Dorsolateral prefrontal cortex (tissue), 120 donors: ENCODE measurements at regions of chr6 and their contacts with region 1.

Region 1: GRCh38 chr6:35048631-35049083 is 92.5 kb downstream of the TCP11 start:
- DNase-seq: peak in 8 of 10 donors; percentile 47 to 74 (median 67)
- H3K4me3 ChIP-seq: peak overlapping the region in 55 of 59 donors; percentile 0 to 63 (median 35)
- H3K27ac ChIP-seq: peak overlapping the region; percentile 80 to 99 (median 97)
- H3K27me3 ChIP-seq: no peaks in the 10 kb centered on the region
- CTCF ChIP-seq: peak in 54 of 56 donors; percentile 15 to 70 (median 56)

Region 2: GRCh38 chr6:35014801-35015200 is 33.9 kb before region 1 on chr6:
- intact Hi-C with region 1: loop called (anchors 2 to 5 kb)
- DNase-seq: no peak
- H3K4me3 ChIP-seq: no peak overlapping the region
- H3K27ac ChIP-seq: peak overlapping the region; percentile 16 to 96 (median 88)
- H3K27me3 ChIP-seq: no peaks in the 10 kb centered on the region
- CTCF ChIP-seq: peak in 2 of 56 donors; percentile 2 to 5

Region 3: DNA sequence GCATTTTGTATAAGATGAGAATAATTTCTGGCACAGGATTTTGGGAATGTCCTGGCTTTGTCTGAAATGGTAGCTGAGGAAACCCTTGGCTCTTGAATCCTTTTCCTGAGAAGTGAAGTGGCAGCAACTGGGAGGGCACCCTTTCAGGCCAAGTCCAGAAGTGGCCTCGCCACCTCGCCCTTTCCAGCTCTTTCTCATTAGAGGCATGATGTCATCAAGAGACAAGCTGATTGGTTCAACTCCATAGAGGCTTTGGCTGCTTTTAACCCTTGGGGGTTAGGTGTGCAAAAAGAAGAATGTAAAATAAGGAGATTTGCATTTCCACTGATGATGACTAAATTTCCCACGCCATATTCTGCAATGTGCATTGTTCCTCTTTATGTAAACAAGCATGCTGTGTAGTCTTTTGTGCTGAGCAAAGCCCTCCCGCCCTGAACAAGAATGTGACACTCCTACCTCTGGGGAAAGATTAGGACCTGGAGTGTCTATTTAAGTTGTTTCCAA is 24.1 kb before region 1 on chr6:
- intact Hi-C with region 1: loop called in 1 of 2 experiments (anchors 1 kb)
- DNase-seq: peak in 2 of 10 donors; percentile 47 to 52
- H3K4me3 ChIP-seq: peak overlapping the region in 9 of 59 donors; percentile 0 to 22 (median 13)
- H3K27ac ChIP-seq: peak overlapping the region in 58 of 59 donors; percentile 9 to 95 (median 82)
- H3K27me3 ChIP-seq: no peaks in the 10 kb centered on the region
- CTCF ChIP-seq: peak in 5 of 56 donors; percentile 8 to 18 (median 14)

Region 4: GRCh38 chr6:35139908-35140655 is 91.4 kb after region 1 on chr6:
- intact Hi-C with region 1: loop called (anchors 2 to 5 kb)
- DNase-seq: peak in 6 of 10 donors; percentile 32 to 55 (median 44)
- H3K4me3 ChIP-seq: peak overlapping the region in 1 of 59 donors; percentile 15
- H3K27ac ChIP-seq: no peak overlapping the region
- H3K27me3 ChIP-seq: peaks cover 0 to 11% (median 0%) of the 10 kb centered on the region in 45 donors
- CTCF ChIP-seq: peak; percentile 77 to 98 (median 88)